Right ventricle myocardium superior (tissue), 1 donor: ENCODE measurements at regions of chr5 and their contacts with region 1.

Region 1: DNA sequence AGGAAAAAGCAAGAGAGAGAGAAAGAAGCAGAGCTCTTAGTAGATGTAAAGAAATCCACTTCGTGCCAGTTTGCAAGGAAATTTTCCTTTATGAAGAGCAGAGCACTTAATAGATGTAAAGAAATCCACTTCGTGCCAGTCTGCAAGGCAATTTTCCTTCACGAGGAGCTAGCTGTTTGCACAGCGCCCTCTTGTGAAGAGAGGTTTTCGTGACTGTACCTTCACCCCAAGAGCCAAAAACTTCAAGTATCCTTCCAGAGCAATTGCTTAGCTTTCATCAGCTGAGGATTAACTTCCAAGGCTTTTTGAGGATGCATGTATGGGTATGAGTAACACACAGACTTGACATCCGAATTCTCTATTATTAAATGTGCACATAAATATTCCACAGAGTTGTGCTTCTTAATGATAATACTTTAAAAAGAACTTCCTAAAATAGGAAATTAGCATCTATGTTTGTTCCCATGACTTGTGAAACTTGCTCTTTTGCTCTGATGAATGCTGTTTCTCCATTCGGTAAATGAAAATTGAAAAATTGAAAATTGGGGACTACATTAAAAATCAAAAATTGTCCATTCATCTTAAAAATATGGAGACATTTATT is 525.6 kb downstream of the PDE4D start:
- DNase-seq: peak; percentile 57
- ATAC-seq: peak; percentile 86

Region 2: GRCh38 chr5:58886315-58887207 is 481.3 kb before region 1 on chr5:
- intact Hi-C with region 1: loop called (anchors 10 kb)
- DNase-seq: peak; percentile 68
- ATAC-seq: peak; percentile 70

Region 3: GRCh38 chr5:59193616-59194319 is 174.1 kb before region 1 on chr5:
- intact Hi-C with region 1: loop called (anchors 5 kb)
- DNase-seq: no peak
- ATAC-seq: peak; percentile 47

Region 4: DNA sequence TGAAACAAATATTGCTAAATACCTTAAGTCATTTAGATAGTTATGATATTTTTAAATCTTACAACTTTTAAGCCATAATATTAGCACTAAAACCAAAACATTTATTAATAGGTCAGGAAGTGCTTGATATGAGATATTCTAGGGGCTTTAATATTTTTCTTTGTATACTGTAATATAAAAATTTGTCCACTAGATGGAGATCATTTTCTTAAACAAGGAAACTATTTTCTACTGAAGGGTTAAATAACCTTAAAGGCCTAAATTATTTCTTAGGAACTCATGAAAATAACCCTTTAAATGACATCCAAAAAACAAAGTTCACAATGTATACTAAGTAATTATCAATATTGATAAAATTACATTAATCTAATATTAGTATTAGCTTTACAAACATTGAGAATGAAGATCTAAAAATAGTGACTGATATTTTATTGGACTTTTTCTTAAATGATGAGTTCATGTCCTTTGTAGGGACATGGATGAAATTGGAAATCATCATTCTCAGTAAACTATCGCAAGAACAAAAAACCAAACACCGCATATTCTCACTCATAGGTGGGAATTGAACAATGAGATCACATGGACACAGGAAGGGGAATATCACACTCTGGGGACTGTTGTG is 149.4 kb before region 1 on chr5:
- intact Hi-C with region 1: loop called (anchors 2 kb)
- DNase-seq: no peak
- ATAC-seq: no peak

Region 5: GRCh38 chr5:59598547-59598874 is 230.6 kb after region 1 on chr5:
- intact Hi-C with region 1: no loop called
- DNase-seq: no peak
- ATAC-seq: peak; percentile 22